ENCODE measurements at regions of chr14 and their contacts with region 1.

Region 1: GRCh38 chr14:20400965-20401593 is 12.2 kb downstream of the TEP1 start:
- DNase-seq: no peak
- ATAC-seq: peak; percentile 78 to 95 (median 84)
- H3K4me3 ChIP-seq: no peak overlapping the region
- H3K27ac ChIP-seq: peak overlapping the region in 1 of 4 donors; percentile 26
- H3K4me1 ChIP-seq: peaks cover 0 to 6% (median 0%) of the 10 kb centered on the region in 3 donors
- H3K27me3 ChIP-seq: no peaks in the 10 kb centered on the region
- CTCF ChIP-seq: no peak

Region 2: GRCh38 chr14:20143911-20144310 is 257.2 kb before region 1 on chr14:
- intact Hi-C with region 1: no loop called
- DNase-seq: no peak
- ATAC-seq: no peak
- H3K4me3 ChIP-seq: no peak overlapping the region
- H3K27ac ChIP-seq: no peak overlapping the region
- H3K4me1 ChIP-seq: no peaks in the 10 kb centered on the region
- H3K27me3 ChIP-seq: no peaks in the 10 kb centered on the region
- CTCF ChIP-seq: no peak

Region 3: DNA sequence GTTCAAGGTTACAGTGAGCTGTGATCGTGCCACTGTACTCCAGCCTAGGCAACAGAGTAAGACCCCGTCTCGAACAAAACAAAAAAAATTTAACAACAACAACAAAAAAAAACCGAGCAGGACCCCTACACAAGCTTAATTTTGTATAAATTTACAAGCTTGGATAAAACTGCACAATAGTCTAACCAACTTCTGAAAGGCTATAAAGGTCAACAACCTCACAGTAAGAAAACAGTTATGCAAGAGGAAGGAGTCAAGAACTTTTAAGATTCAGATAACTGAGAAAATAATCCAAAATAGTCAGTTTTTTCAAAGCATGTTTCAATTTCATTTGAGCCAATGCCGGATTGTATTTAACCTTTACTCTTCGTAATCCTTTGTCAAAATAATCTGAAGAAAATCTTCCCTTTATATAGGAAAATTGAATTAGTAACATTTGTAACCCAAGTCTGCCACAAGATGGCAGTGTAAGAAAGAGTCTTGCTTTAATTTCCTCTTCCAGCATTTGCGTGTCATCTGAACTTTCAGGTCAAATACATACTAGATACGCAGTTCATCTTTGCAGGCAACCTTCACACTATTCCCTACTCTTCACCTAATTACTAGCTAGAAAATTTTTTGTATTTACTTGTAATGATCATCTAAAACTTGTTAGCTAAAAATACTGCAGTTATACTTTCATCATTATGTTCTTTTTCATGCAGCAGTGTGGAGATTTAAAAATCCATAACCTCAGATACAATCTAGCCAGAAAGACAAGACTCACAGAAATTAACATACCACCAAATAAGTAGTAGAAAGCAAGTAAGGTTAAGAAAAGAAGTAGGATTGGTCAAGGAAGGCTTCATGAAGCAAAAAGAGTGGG is 73.8 kb before region 1 on chr14:
- intact Hi-C with region 1: loop called in 1 of 3 experiments (anchors 10 kb)
- DNase-seq: no peak
- ATAC-seq: peak; percentile 69 to 88 (median 84)
- H3K4me3 ChIP-seq: no peak overlapping the region
- H3K27ac ChIP-seq: no peak overlapping the region
- H3K4me1 ChIP-seq: peaks cover 0 to 3% (median 3%) of the 10 kb centered on the region in 3 donors
- H3K27me3 ChIP-seq: no peaks in the 10 kb centered on the region
- CTCF ChIP-seq: peak; percentile 25 to 66 (median 60)

Region 4: DNA sequence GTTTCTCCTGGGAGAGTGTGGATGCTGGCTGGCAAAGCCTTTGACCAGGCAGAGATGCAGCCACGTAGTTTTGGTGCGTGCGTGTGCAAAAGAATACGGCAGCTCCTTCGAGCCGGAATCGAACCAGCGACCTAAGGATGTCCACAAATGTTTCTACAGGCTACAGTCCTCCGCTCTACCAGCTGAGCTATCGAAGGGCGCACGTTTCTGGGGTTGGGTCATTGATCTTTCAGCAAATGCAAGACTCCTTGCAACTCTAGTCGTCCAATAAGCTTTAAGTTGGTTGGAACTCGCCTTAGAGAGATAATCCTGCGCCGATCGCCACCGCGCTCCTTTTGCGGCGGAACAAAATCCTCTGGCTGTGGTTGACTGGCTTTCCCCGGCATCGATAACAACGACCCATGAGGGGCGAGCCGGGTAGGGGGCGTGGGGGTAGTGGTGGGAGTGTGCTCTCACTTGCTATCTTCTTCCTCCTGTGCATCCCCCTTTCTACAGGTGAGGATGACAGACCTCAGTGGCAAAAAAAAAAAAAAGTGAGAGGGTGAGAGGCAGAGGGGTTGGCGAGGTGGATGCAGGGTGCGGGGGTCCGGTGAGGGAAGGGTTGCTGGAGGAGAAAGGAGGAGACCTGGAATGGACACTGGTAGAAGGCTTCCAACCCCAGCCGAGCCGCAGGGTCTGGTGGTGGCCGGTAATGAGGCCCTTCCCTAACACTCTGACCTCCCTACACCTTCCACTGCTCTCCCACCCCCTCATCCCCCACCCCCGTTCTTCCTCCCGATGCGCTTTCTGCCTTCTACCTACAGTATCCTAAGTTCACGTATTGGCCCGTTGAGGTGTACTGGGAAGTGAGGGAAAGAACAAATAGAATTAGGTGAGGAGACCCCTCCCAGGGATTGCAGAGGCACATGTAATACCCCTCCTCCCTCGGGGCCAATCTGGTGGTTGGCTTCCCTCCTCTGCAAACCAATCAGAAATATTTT is 252.2 kb after region 1 on chr14:
- intact Hi-C with region 1: no loop called
- DNase-seq: peak in 1 of 6 donors; percentile 52
- ATAC-seq: peak in 3 of 4 donors; percentile 35 to 64 (median 36)
- H3K4me3 ChIP-seq: no peak overlapping the region
- H3K27ac ChIP-seq: no peak overlapping the region
- H3K4me1 ChIP-seq: peaks cover 0 to 5% (median 0%) of the 10 kb centered on the region in 3 donors
- H3K27me3 ChIP-seq: peaks cover 0 to 26% (median 0%) of the 10 kb centered on the region in 4 donors
- CTCF ChIP-seq: no peak

Measured in pancreas (tissue), 10 donors.